ENCODE measurements at regions of chr11 and their contacts with region 1.

Region 1: GRCh38 chr11:83054904-83055380 is 16.8 kb downstream of the RAB30 start:
- DNase-seq: no peak
- H3K4me3 Mint-ChIP-seq: no peak overlapping the region
- H3K27ac Mint-ChIP-seq: no peak overlapping the region
- H3K4me1 Mint-ChIP-seq: peaks cover 39% of the 10 kb centered on the region
- H3K27me3 Mint-ChIP-seq: no peaks in the 10 kb centered on the region

Region 2: GRCh38 chr11:82842019-82842418 is 212.9 kb before region 1 on chr11:
- CTCF ChIA-PET with region 1: no interaction called
- POLR2A ChIA-PET with region 1: no interaction called
- DNase-seq: no peak
- H3K4me3 Mint-ChIP-seq: no peak overlapping the region
- H3K27ac Mint-ChIP-seq: no peak overlapping the region
- H3K4me1 Mint-ChIP-seq: no peaks in the 10 kb centered on the region
- H3K27me3 Mint-ChIP-seq: no peaks in the 10 kb centered on the region

Region 3: DNA sequence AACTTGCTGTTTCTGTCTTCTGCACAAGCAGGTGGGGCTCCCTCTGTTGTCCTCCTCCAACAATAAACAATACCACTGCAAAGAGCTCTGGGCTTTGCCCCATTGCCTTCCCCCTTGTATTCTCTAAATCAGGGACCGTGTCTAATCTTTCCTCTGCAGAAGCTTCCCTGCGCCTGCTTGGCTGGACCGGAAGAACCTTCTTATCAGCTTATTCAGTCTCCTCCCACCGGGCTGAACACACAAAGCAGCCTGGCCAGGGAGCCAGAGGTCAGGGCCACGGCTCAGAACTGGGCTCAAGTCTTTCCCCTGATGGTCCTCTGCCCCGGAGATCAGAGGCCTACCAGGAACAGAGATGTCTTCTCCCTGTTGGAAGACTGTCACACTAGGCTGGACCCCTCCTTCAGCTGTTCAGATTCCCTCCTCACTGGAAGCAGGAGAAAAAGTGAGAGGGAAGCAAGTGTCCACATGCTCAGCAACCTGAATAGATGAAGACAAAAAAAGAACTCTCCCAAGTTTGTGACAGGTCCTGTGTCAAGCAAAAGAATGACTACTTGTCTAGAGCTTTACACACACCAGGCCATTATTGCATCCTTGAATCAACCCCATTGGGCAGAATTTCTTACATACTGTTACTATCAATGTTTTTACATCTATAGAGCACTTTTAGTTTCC is 46.9 kb before region 1 on chr11:
- CTCF ChIA-PET with region 1: no interaction called
- POLR2A ChIA-PET with region 1: no interaction called
- DNase-seq: no peak
- H3K4me3 Mint-ChIP-seq: no peak overlapping the region
- H3K27ac Mint-ChIP-seq: no peak overlapping the region
- H3K4me1 Mint-ChIP-seq: peaks cover 41% of the 10 kb centered on the region
- H3K27me3 Mint-ChIP-seq: no peaks in the 10 kb centered on the region

Region 4: DNA sequence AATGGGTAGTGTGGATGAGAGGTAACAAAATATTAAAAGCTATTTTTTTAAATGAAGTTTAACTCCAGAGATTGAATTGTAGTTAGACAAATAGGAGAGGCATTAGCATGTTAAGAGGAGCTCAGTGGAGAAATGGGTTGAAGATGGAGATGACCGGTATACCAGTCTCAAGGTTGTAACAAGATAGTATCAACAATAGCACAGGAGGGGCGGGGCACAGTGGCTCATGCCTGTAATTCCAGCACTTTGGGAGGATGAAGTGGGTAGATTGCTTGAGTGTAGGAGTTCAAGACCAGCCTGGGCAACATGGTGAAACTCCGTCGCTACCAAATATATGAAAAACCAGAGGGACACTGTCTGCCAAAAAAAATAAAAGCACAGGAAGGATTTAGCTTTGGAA is 132.5 kb after region 1 on chr11:
- CTCF ChIA-PET with region 1: no interaction called
- POLR2A ChIA-PET with region 1: interaction called, 10 read pairs
- DNase-seq: no peak
- H3K4me3 Mint-ChIP-seq: no peak overlapping the region
- H3K27ac Mint-ChIP-seq: no peak overlapping the region
- H3K4me1 Mint-ChIP-seq: peaks cover 9% of the 10 kb centered on the region
- H3K27me3 Mint-ChIP-seq: no peaks in the 10 kb centered on the region